ENCODE measurements at regions of chr16 and their contacts with region 1.

Region 1: DNA sequence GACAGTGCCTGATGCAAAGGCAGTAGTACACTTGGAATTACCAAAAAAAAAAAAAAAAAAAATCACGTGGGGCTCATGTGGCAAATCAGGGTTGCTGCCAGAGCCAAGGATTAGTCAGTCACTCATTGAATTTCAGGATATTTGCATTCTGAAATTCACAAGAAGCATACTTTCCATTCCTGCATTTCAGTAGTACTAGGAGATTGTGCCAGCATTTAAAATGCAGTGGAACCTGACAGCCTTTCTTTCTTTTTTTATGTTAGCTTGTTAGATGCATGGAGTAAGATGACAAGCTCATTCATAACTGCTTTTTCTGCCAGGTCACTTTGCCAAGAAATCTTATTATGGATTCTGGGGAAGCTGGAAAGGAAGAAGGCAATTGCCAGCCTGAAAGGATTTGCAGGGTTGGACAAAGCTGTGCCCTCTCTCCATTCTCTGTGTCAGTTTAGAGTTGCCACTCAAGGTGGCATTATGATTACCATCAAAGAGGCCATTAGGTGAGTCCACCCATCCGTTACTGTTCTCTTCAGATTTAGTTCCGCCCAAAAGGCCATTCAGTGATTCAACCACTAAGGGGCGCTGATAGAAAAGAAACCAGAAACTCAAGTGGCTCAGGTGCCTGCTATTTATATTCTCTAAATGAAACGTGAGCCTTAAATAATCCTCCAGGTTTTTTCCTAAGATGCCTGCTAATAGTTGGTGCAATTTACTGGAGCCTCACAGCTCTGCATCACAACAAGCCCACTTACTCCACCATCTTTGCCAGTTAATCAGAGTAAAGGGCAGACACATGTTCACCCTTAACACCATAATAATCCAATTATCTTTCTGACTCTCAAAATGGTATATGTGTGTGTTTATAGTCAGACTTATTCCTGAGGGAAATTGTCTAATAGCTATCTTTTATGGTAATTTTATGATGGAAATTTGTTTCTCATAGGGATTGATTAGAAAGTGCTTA is 59.0 kb downstream of the TANGO6 start:
- DNase-seq: peak; percentile 55
- H3K4me3 ChIP-seq: no peak overlapping the region; a peak in 1 of 4 replicates
- H3K27ac ChIP-seq: peak overlapping the region; percentile 17 to 35; a peak in 2 of 4 replicates
- H3K4me1 ChIP-seq: peaks cover 2 to 9% of the 10 kb centered on the region in 2 experiments
- H3K27me3 ChIP-seq: no peaks in the 10 kb centered on the region
- CTCF ChIP-seq: peak; percentile 92
- EP300 ChIP-seq: peak in 1 of 2 experiments; percentile 3; a peak in 1 of 4 replicates
- RAD21 ChIP-seq: peak; percentile 86

Region 2: GRCh38 chr16:68811503-68811902 is 90.8 kb before region 1 on chr16:
- CTCF ChIA-PET with region 1: no interaction called
- POLR2A ChIA-PET with region 1: no interaction called
- DNase-seq: no peak
- H3K4me3 ChIP-seq: no peak overlapping the region
- H3K27ac ChIP-seq: no peak overlapping the region
- H3K4me1 ChIP-seq: no peaks in the 10 kb centered on the region
- H3K27me3 ChIP-seq: no peaks in the 10 kb centered on the region; the same call in 1 of the 2 replicates
- CTCF ChIP-seq: no peak
- EP300 ChIP-seq: no peak
- RAD21 ChIP-seq: no peak

Region 3: GRCh38 chr16:69105489-69106361 is 203.4 kb after region 1 on chr16 and contains the start of gene HAS3:
- CTCF ChIA-PET with region 1: interaction called, 14 read pairs
- POLR2A ChIA-PET with region 1: no interaction called
- DNase-seq: peak; percentile 90
- H3K4me3 ChIP-seq: peak within 1 kb of the TSS; percentile 67 to 76
- H3K27ac ChIP-seq: no peak within 1 kb of the TSS
- H3K4me1 ChIP-seq: peaks cover 8 to 18% of the 10 kb centered on the region in 2 experiments; a peak in 3 of 4 replicates
- H3K27me3 ChIP-seq: no peaks in the 10 kb centered on the region
- CTCF ChIP-seq: no peak
- EP300 ChIP-seq: no peak
- RAD21 ChIP-seq: peak; percentile 62
- polyA plus RNA-seq, gene HAS3: 38.7 and 52.4 TPM in 2 replicates

Region 4: DNA sequence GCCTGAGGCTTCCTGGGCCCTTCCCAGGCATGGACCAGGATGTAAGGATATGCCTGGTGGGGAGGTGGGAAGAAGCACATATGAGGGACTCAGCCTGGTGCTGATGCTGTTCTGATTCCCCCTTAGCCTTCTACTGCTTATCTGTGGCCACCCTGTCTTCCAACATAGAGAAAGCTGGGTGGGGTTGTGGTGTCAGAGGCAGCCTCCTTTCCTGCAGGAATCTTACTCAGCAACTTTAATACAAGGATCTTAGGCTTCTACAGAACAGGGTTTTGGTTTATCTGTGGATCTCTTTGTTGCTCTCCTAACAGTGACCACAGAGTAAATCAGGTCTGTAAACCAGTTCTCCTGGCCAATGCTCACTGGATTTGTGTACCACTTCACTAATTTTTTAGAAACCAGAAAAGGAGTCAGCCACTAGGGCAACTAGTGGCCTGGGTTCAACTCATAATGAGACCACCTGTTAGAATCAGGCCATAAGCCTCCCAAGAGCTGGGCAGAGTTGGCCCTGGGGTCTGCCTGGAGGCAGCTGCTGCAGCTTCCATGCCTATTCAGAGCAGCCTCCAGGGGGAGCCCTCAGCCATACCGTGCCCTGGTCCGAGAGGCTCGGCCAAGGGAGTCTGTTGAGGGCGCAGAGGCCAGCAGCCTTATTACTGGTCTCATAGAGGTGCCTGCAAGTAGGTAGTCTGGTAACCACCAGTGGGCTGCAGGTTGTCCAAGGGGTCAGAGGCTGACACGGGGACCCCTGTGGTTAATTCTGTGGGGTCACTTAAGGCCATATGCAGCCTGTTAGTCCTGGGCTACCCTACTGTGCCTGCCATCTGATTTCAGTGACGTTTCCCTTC is 210.2 kb after region 1 on chr16:
- CTCF ChIA-PET with region 1: interaction called, 39 read pairs
- POLR2A ChIA-PET with region 1: no interaction called
- DNase-seq: peak; percentile 82
- H3K4me3 ChIP-seq: no peak overlapping the region; a peak in 1 of 4 replicates
- H3K27ac ChIP-seq: no peak overlapping the region
- H3K4me1 ChIP-seq: no peaks in the 10 kb centered on the region; a peak in 1 of 4 replicates
- H3K27me3 ChIP-seq: no peaks in the 10 kb centered on the region
- CTCF ChIP-seq: peak; percentile 74
- EP300 ChIP-seq: no peak
- RAD21 ChIP-seq: peak; percentile 52

Measured in SK-N-SH (cell line).